Panc1 (cell line): ENCODE measurements at regions of chr12 and their contacts with region 1.

Region 1: GRCh38 chr12:93502802-93503623 is 35.7 kb downstream of the MRPL42 start:
- DNase-seq: peak; percentile 38
- ATAC-seq: peak; percentile 65
- H3K4me3 ChIP-seq: no peak overlapping the region
- H3K27ac ChIP-seq: no peak overlapping the region
- H3K4me1 ChIP-seq: peaks cover 10% of the 10 kb centered on the region; the same call in 1 of the 2 replicates
- H3K27me3 ChIP-seq: no peaks in the 10 kb centered on the region
- CTCF ChIP-seq: peak; percentile 84

Region 2: DNA sequence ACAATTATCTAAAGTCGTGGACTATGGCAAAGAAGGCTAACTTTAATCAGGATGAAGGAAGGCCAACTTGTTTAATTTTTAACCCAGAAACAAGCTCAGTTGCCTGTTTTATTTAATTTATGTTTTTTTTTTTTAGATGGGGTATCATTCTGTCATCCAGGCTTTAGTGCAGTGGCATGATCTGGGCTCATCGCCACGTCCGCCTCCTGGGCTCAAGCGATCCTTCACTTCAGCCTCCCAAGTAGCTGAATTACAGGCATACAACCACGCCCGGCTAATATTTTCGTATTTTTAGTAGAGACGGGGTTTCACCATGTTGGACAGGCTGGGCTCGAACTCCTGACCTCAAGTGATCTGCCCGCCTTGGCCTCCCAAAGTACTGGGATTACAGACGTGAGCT is 105.6 kb before region 1 on chr12:
- CTCF ChIA-PET with region 1: no interaction called
- POLR2A ChIA-PET with region 1: no interaction called
- in situ Hi-C with region 1: no loop called
- intact Hi-C with region 1: no loop called
- DNase-seq: no peak
- ATAC-seq: no peak
- H3K4me3 ChIP-seq: no peak overlapping the region
- H3K27ac ChIP-seq: no peak overlapping the region
- H3K4me1 ChIP-seq: no peaks in the 10 kb centered on the region
- H3K27me3 ChIP-seq: no peaks in the 10 kb centered on the region
- CTCF ChIP-seq: no peak

Region 3: GRCh38 chr12:93563807-93564538 is 61.0 kb after region 1 on chr12:
- CTCF ChIA-PET with region 1: interaction called, 18 read pairs
- POLR2A ChIA-PET with region 1: no interaction called
- in situ Hi-C with region 1: no loop called
- intact Hi-C with region 1: loop called (anchors 2 kb)
- DNase-seq: peak; percentile 98
- ATAC-seq: peak; percentile 98
- H3K4me3 ChIP-seq: no peak overlapping the region
- H3K27ac ChIP-seq: peak overlapping the region; percentile 85
- H3K4me1 ChIP-seq: peaks cover 27% of the 10 kb centered on the region
- H3K27me3 ChIP-seq: no peaks in the 10 kb centered on the region
- CTCF ChIP-seq: peak; percentile 70

Region 4: GRCh38 chr12:93742110-93742934 is 239.3 kb after region 1 on chr12:
- CTCF ChIA-PET with region 1: interaction called, 6 read pairs
- POLR2A ChIA-PET with region 1: no interaction called
- in situ Hi-C with region 1: no loop called
- intact Hi-C with region 1: loop called (anchors 5 kb)
- DNase-seq: peak; percentile 38
- ATAC-seq: peak; percentile 99
- H3K4me3 ChIP-seq: peak overlapping the region; percentile 73 to 74
- H3K27ac ChIP-seq: peak overlapping the region; percentile 93
- H3K4me1 ChIP-seq: peaks cover 11% of the 10 kb centered on the region
- H3K27me3 ChIP-seq: no peaks in the 10 kb centered on the region
- CTCF ChIP-seq: peak; percentile 84

Region 5: GRCh38 chr12:94025756-94026155 is 522.7 kb after region 1 on chr12:
- CTCF ChIA-PET with region 1: no interaction called
- POLR2A ChIA-PET with region 1: interaction called, 12 read pairs
- in situ Hi-C with region 1: no loop called
- intact Hi-C with region 1: no loop called
- DNase-seq: no peak
- ATAC-seq: no peak
- H3K4me3 ChIP-seq: no peak overlapping the region
- H3K27ac ChIP-seq: no peak overlapping the region
- H3K4me1 ChIP-seq: no peaks in the 10 kb centered on the region
- H3K27me3 ChIP-seq: no peaks in the 10 kb centered on the region
- CTCF ChIP-seq: no peak

Region 6: DNA sequence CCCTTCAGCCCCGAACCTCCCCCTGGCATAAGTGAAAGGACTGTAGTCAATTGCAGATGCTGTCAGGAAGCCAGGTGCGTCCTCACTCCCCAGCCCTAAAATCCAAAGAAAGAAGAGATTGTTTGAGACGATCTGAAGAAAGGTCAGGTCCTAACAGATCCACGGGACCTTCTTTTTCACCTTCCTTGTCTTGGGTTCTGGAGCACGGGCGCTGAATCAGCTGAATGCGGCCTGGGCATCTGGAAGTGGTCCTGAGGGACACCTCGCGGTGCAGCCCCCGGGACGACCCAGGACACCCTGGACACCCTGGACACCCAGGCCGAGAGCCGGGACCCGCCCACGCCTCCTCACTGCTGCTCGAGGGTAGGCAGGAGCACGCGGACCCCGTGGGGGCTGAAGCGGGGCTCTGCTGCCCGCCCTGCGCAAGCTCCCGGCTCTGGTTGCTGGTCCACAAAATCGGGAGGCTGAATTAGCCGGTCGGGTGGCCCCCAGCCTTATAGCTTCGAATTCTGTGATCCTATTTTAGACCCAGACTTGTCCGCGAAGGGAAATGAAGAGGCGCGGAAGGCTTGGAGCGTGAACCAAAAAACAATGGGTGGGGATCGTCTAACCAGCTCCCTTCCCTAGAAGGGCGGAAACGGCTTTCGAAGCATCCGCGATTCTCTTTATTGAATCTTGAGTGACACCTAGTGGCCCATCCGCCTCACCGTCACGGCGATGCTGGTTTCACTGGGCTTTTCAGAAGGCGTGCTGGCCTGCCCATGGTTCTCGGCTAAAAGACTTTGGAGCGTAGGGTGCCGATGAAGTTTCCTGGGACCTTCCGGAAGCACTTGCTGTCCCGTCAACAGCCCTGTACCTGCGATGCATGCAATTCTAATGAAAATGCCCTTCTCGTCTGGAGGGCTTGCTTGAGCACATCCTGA is 599.0 kb after region 1 on chr12:
- CTCF ChIA-PET with region 1: interaction called, 38 read pairs
- POLR2A ChIA-PET with region 1: interaction called, 10 read pairs
- in situ Hi-C with region 1: no loop called
- intact Hi-C with region 1: loop called (anchors 5 kb)
- DNase-seq: peak; percentile 65
- ATAC-seq: peak; percentile 87
- H3K4me3 ChIP-seq: peak overlapping the region; percentile 65 to 81
- H3K27ac ChIP-seq: 0 out of 2 replicates have a peak overlapping the region, but pooled peaks have one; percentile 35
- H3K4me1 ChIP-seq: peaks cover 22% of the 10 kb centered on the region
- H3K27me3 ChIP-seq: no peaks in the 10 kb centered on the region
- CTCF ChIP-seq: peak; percentile 75